Heart left ventricle (tissue), 16 donors: ENCODE measurements at regions of chr11 and their contacts with region 1.

Region 1: DNA sequence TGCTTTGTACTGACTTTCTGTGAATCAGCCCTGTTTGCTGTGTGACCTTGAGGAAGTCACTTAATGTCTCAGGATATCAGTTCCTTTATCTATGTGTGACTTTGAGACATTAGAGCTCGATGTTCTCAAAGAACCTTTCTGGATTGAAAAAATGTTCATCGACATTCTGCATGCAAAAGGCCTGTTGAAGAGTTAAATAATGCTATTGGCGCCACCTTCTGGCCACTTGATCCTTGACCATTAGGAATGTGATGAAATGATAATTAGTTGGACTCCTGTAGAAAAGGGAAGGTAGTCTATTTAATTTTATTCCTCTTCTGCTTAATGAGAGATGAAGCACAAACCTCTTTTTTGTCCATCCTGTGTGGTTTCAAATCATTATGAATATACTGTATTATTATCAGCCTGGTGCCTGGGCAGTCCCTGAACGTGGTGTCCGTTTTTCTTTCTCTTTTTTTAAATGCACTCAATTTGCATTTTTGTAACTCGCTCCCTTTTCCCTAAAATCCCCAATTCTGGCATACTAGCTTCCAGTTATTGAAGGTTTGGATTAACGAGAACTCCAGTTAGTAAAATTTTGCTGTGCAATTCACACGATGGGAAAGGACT is 20.7 kb downstream of the ELF5 start:
- DNase-seq: peak in 3 of 5 donors; percentile 16 to 62 (median 31)
- ATAC-seq: peak in 1 of 4 donors; percentile 36
- H3K4me3 ChIP-seq: no peak overlapping the region
- H3K27ac ChIP-seq: no peak overlapping the region
- H3K4me1 ChIP-seq: no peaks in the 10 kb centered on the region
- H3K27me3 ChIP-seq: peaks cover 0 to 3% (median 0%) of the 10 kb centered on the region in 9 donors
- CTCF ChIP-seq: peak; percentile 44 to 80 (median 69)
- POLR2A ChIP-seq: no peak

Region 2: GRCh38 chr11:33808228-33808828 is 684.6 kb before region 1 on chr11:
- intact Hi-C with region 1: loop called in 1 of 10 experiments (anchors 10 kb)
- DNase-seq: peak; percentile 81 to 87 (median 84)
- ATAC-seq: peak; percentile 83 to 93 (median 86)
- H3K4me3 ChIP-seq: no peak overlapping the region
- H3K27ac ChIP-seq: no peak overlapping the region
- H3K4me1 ChIP-seq: peaks cover 0 to 7% (median 0%) of the 10 kb centered on the region in 12 donors
- H3K27me3 ChIP-seq: peaks cover 0 to 6% (median 0%) of the 10 kb centered on the region in 9 donors
- CTCF ChIP-seq: peak; percentile 87 to 95 (median 92)
- POLR2A ChIP-seq: no peak

Region 3: GRCh38 chr11:34002268-34002807 is 490.6 kb before region 1 on chr11:
- intact Hi-C with region 1: loop called in 2 of 10 experiments (anchors 10 kb)
- DNase-seq: no peak
- ATAC-seq: no peak
- H3K4me3 ChIP-seq: no peak overlapping the region
- H3K27ac ChIP-seq: no peak overlapping the region
- H3K4me1 ChIP-seq: peaks cover 0 to 1% (median 0%) of the 10 kb centered on the region in 12 donors
- H3K27me3 ChIP-seq: peaks cover 0 to 14% (median 2%) of the 10 kb centered on the region in 9 donors
- CTCF ChIP-seq: no peak
- POLR2A ChIP-seq: no peak

Region 4: DNA sequence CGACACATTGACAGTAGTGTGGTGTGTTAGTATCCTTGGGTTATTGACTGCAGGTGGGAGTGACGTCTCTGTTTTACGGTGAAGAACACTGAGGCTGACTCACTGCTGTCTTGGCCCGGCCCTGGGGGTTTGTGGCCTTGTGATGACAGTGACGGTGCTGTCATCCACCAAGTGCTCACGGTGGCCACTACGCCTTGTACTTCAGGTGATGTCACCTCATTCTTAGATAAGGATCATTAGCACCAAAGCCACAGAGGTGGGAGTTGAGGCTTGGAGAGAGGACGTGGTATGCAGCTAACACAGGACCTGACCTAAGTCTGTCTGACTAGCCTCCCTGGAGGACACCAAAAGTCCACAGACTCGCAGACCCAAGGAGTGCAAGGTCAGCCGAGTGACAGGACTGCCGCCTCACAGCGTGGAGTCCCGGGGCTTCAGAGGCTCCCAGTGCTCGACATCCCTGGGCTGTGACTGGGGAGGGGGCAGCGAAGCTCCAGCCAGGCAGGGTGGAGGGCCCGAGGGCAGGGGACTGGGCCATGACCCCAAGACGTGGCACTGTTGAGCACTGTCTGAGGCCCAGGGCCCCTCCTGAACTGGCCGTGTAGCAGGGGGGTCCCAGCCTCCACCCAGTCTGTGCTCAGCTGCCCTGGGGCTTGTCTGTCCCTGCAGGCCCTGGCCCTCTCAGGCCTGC is 331.0 kb before region 1 on chr11:
- intact Hi-C with region 1: loop called in 1 of 10 experiments (anchors 10 kb)
- DNase-seq: no peak
- ATAC-seq: no peak
- H3K4me3 ChIP-seq: no peak overlapping the region
- H3K27ac ChIP-seq: no peak overlapping the region
- H3K4me1 ChIP-seq: peaks cover 0 to 16% (median 4%) of the 10 kb centered on the region in 12 donors
- H3K27me3 ChIP-seq: no peaks in the 10 kb centered on the region
- CTCF ChIP-seq: no peak
- POLR2A ChIP-seq: no peak

Region 5: GRCh38 chr11:34174412-34175041 is 318.4 kb before region 1 on chr11:
- intact Hi-C with region 1: loop called in 8 of 10 experiments (anchors 5 to 10 kb)
- DNase-seq: peak; percentile 82 to 93 (median 83)
- ATAC-seq: peak; percentile 94 to 99 (median 98)
- H3K4me3 ChIP-seq: peak overlapping the region in 10 of 12 donors; percentile 17 to 48 (median 32)
- H3K27ac ChIP-seq: peak overlapping the region in 1 of 12 donors; percentile 24
- H3K4me1 ChIP-seq: peaks cover 0 to 17% (median 11%) of the 10 kb centered on the region in 12 donors
- H3K27me3 ChIP-seq: no peaks in the 10 kb centered on the region
- CTCF ChIP-seq: peak; percentile 85 to 97 (median 93)
- POLR2A ChIP-seq: no peak

Region 6: GRCh38 chr11:34366522-34366921 is 126.4 kb before region 1 on chr11:
- intact Hi-C with region 1: loop called (anchors 2 to 10 kb)
- DNase-seq: no peak
- ATAC-seq: no peak
- H3K4me3 ChIP-seq: no peak overlapping the region
- H3K27ac ChIP-seq: no peak overlapping the region
- H3K4me1 ChIP-seq: peaks cover 0 to 6% (median 0%) of the 10 kb centered on the region in 12 donors
- H3K27me3 ChIP-seq: peaks cover 0 to 6% (median 0%) of the 10 kb centered on the region in 9 donors
- CTCF ChIP-seq: peak in 6 of 12 donors; percentile 17 to 42 (median 34)
- POLR2A ChIP-seq: no peak

Region 7: DNA sequence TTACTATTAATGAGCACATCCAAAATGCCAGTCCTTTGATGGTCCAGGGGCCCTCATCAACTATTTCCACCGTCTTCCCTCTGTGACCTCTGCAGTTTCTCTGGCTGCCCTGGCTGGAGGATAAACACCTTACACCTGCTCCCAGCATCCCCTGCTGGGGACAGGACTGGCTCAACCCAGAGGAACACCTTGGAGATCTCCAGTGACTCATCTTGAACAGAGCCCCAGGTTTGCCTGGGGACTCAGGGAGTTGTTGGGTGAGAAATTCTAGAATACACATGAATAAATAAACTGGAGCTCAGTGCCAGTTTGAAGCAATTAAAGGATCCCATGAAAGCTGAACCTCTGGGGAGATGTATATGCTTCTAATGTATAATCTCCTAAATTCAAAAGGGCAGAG is 44.7 kb after region 1 on chr11:
- intact Hi-C with region 1: no loop called
- DNase-seq: no peak
- ATAC-seq: no peak
- H3K4me3 ChIP-seq: no peak overlapping the region
- H3K27ac ChIP-seq: no peak overlapping the region
- H3K4me1 ChIP-seq: no peaks in the 10 kb centered on the region
- H3K27me3 ChIP-seq: peaks cover 0 to 19% (median 7%) of the 10 kb centered on the region in 9 donors
- CTCF ChIP-seq: no peak
- POLR2A ChIP-seq: no peak

Region 8: DNA sequence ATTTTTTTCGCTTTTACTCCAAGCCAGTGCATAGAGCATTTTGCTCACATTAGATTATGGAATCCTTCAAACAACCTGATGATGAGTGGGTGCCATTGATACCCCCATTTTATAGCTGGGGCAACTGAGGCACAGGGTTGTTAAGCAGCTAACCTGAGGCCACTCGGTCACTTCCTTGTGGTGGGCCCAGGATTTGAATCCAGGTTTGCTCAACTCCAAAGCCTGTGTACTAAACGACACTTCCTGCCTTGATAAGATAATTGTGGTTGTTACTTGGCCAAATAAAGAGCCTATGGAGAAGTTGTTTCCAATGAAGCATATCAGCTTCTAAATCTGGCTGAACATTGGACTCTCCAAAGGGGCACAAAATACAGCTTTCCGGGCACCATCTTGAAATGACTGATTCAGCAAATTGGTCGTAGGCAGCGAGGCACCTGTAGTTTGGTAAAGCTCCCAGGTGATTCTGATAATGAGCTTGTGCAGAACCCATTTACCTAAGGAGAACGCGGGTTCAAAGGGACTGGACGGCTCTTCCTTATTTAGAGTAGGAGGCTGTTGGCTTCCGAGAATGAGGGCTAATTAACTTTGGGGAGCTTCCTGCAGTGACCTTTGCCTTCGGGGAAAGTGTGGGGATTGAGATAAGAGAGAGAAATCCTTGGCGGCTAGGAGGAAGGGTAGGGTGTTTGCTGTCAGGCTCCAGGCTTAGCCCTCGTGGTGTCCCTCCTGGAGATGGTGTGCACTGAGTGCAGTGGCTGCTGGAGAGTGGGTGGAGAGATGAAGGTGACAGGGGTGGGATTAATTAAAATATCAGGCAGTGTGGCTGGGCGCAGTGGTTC is 110.4 kb after region 1 on chr11:
- intact Hi-C with region 1: no loop called
- DNase-seq: no peak
- ATAC-seq: no peak
- H3K4me3 ChIP-seq: no peak overlapping the region
- H3K27ac ChIP-seq: no peak overlapping the region
- H3K4me1 ChIP-seq: peaks cover 0 to 26% (median 8%) of the 10 kb centered on the region in 12 donors
- H3K27me3 ChIP-seq: no peaks in the 10 kb centered on the region
- CTCF ChIP-seq: no peak
- POLR2A ChIP-seq: no peak

Region 9: GRCh38 chr11:34614344-34615104 is 121.6 kb after region 1 on chr11:
- intact Hi-C with region 1: no loop called
- DNase-seq: no peak
- ATAC-seq: peak; percentile 35 to 67 (median 60)
- H3K4me3 ChIP-seq: no peak overlapping the region
- H3K27ac ChIP-seq: peak overlapping the region in 11 of 12 donors; percentile 14 to 76 (median 50)
- H3K4me1 ChIP-seq: peaks cover 0 to 37% (median 16%) of the 10 kb centered on the region in 12 donors
- H3K27me3 ChIP-seq: no peaks in the 10 kb centered on the region
- CTCF ChIP-seq: no peak
- POLR2A ChIP-seq: no peak